A673 (cell line): ENCODE measurements at regions of chr6 and their contacts with region 1.

Region 1: GRCh38 chr6:30102970-30103874 is 9.7 kb downstream of the TRIM31 start:
- DNase-seq: peak; percentile 95
- H3K4me3 ChIP-seq: peak overlapping the region; percentile 48
- H3K27ac ChIP-seq: no peak overlapping the region
- H3K4me1 ChIP-seq: peaks cover 18% of the 10 kb centered on the region
- H3K27me3 ChIP-seq: peaks cover 43% of the 10 kb centered on the region
- CTCF ChIP-seq: peak; percentile 94

Region 2: DNA sequence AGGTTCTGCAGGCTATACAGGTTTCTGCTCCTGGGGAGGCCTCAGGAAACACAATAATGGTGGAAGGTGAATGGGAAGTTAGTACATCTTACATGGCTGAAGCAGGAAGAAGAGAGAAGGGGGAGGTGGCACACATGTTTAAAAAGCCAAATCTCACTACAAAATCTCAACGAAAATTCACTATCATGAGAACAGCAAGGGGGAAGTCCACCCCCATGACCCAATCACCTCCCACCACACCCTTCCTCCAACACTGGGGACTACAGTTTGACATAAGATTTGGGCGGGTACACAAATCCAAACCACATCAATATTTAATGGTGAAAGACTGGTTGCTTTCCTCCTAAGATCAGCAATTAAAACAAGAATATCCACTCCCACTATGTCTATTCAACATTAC is 56.0 kb before region 1 on chr6:
- CTCF ChIA-PET with region 1: no interaction called
- POLR2A ChIA-PET with region 1: no interaction called
- intact Hi-C with region 1: no loop called
- DNase-seq: no peak
- H3K4me3 ChIP-seq: no peak overlapping the region
- H3K27ac ChIP-seq: no peak overlapping the region
- H3K4me1 ChIP-seq: peaks cover 5% of the 10 kb centered on the region
- H3K27me3 ChIP-seq: no peaks in the 10 kb centered on the region
- CTCF ChIP-seq: no peak

Region 3: GRCh38 chr6:30066577-30067459 is 36.4 kb before region 1 on chr6 and contains the start of gene PPP1R11:
- CTCF ChIA-PET with region 1: interaction called, 9 read pairs
- POLR2A ChIA-PET with region 1: no interaction called
- intact Hi-C with region 1: loop called (anchors 5 kb)
- DNase-seq: peak; percentile 100
- H3K4me3 ChIP-seq: peak within 1 kb of the TSS; percentile 73
- H3K27ac ChIP-seq: peak within 1 kb of the TSS; percentile 83
- H3K4me1 ChIP-seq: peaks cover 20% of the 10 kb centered on the region
- H3K27me3 ChIP-seq: peaks cover 10% of the 10 kb centered on the region
- CTCF ChIP-seq: no peak
- total RNA-seq, gene PPP1R11: 46.2 and 46.8 TPM in 2 replicates

Region 4: DNA sequence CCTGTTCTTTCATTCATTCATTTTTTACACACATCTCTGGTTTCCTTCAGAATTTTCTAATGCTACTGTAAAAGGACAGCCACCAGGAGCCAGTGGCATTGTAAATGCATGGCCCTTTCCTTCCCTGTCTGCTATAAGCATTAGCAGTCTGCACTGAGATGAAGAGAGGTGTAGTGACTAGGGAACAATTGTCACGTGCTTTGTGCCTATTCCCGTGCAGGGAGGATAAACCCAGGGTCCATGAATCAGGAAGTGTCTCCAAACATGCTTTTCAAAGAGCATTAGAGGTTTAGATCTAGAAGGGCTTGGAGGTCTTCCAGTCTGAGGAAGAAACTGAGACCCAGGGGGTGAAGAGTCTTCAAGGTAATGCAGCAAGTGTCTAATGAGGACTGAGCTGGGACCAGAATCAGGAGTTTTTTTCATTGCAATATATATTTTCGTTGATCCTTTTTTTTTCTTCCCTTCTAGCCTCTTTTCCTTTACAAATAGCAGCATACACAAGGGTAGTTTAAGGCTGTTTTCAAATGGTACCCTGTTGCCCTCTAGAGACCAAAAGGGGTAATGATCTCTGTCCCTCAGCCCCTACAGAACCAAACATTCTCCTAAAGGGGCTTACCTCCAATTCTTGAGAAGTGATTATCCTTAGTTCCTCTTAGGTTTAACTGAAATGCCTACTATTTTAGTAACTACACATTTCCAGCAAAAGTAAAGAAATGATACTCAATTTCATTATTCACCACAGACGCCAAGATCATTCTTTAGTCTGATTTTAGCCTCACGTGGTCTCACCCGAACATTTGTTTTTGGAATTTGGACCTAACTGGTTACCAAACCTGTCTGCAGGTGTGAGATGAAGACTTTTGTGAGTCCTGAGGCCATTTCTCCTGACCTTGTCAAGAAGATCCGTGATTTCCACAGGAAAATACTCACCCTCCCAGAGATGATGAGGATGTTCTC is 66.7 kb after region 1 on chr6:
- CTCF ChIA-PET with region 1: no interaction called
- POLR2A ChIA-PET with region 1: no interaction called
- intact Hi-C with region 1: loop called (anchors 1 kb)
- DNase-seq: peak; percentile 73
- H3K4me3 ChIP-seq: no peak overlapping the region
- H3K27ac ChIP-seq: no peak overlapping the region
- H3K4me1 ChIP-seq: no peaks in the 10 kb centered on the region
- H3K27me3 ChIP-seq: peaks cover 56% of the 10 kb centered on the region
- CTCF ChIP-seq: peak; percentile 79

Region 5: GRCh38 chr6:30483677-30484279 is 380.6 kb after region 1 on chr6:
- CTCF ChIA-PET with region 1: no interaction called
- POLR2A ChIA-PET with region 1: no interaction called
- intact Hi-C with region 1: no loop called
- DNase-seq: peak; percentile 69
- H3K4me3 ChIP-seq: no peak overlapping the region
- H3K27ac ChIP-seq: no peak overlapping the region
- H3K4me1 ChIP-seq: peaks cover 13% of the 10 kb centered on the region
- H3K27me3 ChIP-seq: peaks cover 35% of the 10 kb centered on the region
- CTCF ChIP-seq: peak; percentile 67

Region 6: DNA sequence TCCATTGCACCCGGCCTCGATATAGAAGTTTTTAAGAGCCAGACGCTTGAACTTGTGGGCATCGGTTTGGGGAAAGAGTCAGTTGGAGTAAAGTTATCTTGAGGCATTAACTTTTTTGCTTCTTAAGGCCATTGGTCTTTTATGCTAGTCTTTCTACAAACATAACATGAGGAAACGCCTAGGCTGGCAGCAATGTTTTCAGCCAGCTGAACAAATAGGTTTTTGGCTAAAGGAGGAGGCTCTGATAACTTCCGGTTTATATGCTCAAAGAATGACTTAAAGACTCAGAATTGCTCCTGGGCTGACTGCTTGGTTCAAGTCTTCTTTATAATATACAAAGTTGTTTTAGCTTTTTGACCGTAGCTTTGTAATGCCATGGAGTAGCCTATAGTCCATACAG is 1122.5 kb after region 1 on chr6:
- CTCF ChIA-PET with region 1: no interaction called
- POLR2A ChIA-PET with region 1: no interaction called
- intact Hi-C with region 1: no loop called
- DNase-seq: no peak
- H3K4me3 ChIP-seq: no peak overlapping the region
- H3K27ac ChIP-seq: no peak overlapping the region
- H3K4me1 ChIP-seq: no peaks in the 10 kb centered on the region
- H3K27me3 ChIP-seq: no peaks in the 10 kb centered on the region
- CTCF ChIP-seq: no peak